Naive thymus-derived CD4-positive, alpha-beta T cell (primary cell): ENCODE measurements at regions of chr12 and their contacts with region 1.

Region 1: GRCh38 chr12:26937875-26938700 is at the starts of genes FGFR1OP2 and INTS13:
- DNase-seq: peak; percentile 82 to 96 (median 93)
- ATAC-seq: peak; percentile 95
- H3K4me3 ChIP-seq: peak within 1 kb of the TSS; percentile 96
- H3K4me3 Mint-ChIP-seq: peak within 1 kb of the TSS; percentile 87 to 99 (median 97)
- H3K27ac ChIP-seq: peak within 1 kb of the TSS; percentile 94
- H3K27ac Mint-ChIP-seq: peak within 1 kb of the TSS; percentile 91 to 99 (median 95)
- H3K4me1 ChIP-seq: peaks cover 32 to 35% of the 10 kb centered on the region in 2 donors
- H3K4me1 Mint-ChIP-seq: peaks cover 42 to 79% (median 68%) of the 10 kb centered on the region in 7 donors
- H3K27me3 ChIP-seq: no peaks in the 10 kb centered on the region
- H3K27me3 Mint-ChIP-seq: peaks cover 0 to 3% (median 0%) of the 10 kb centered on the region in 5 donors
- total RNA-seq, gene FGFR1OP2: 35.6 to 84.0 (median 79.0) TPM
- total RNA-seq, gene INTS13: 13.2 to 46.7 (median 19.0) TPM

Region 2: GRCh38 chr12:25386831-25387731 is 1551.0 kb before region 1 on chr12:
- CTCF ChIA-PET with region 1: no interaction called
- POLR2A ChIA-PET with region 1: no interaction called
- intact Hi-C with region 1: loop called in 1 of 2 experiments (anchors 1 kb)
- DNase-seq: peak; percentile 48 to 86 (median 83)
- ATAC-seq: peak; percentile 18
- H3K4me3 ChIP-seq: peak overlapping the region; percentile 97
- H3K4me3 Mint-ChIP-seq: peak overlapping the region; percentile 90 to 100 (median 96)
- H3K27ac ChIP-seq: peak overlapping the region; percentile 98
- H3K27ac Mint-ChIP-seq: peak overlapping the region; percentile 91 to 100 (median 100)
- H3K4me1 ChIP-seq: peaks cover 19 to 24% of the 10 kb centered on the region in 2 donors
- H3K4me1 Mint-ChIP-seq: peaks cover 13 to 61% (median 35%) of the 10 kb centered on the region in 7 donors
- H3K27me3 ChIP-seq: no peaks in the 10 kb centered on the region
- H3K27me3 Mint-ChIP-seq: peaks cover 0 to 2% (median 0%) of the 10 kb centered on the region in 5 donors

Region 3: DNA sequence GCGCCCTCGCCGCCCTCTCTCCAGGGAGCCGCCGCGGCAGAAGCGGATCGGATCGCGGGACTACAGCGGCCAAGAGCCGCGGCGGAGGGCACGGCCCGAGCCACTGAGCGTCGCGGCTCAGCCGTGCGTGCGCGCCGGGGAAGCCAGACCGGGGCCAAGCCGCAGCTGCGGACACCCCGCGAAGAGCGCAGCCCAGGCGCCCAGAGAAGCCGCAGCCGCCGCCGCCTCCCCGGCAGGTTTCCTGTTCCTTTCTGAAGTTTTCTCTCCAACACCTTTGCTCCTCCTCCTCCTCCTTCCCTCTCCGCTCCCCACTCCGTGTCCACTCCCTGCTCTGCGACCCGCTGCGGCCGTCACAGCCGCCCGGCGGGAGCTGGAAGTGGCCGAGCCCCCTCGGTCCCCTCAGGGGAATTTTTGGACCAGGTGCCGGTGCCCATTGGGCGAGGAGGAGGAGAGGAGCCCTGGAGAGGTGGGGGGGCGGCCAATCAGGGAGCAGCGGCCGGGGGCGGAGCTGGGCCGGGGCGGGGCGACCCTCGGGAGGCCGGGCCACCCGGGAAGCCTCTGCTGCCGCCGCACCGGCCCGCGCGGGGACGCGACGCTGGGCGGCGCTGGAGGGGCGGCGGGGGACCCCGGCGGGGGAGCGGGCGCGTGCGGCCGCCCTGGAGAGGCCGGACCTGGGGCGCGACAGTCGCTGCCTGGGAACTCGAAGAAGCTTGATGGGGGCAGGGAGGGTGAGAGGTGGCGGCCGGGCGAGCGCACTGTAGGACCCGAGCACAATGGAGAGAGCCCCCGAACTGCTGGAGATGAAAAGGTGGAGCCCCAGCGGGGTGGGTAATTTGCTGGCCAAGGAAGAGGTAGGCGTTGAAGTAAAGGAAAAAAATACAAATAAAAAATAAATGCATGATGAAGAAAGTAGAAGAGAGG is 105.0 kb before region 1 on chr12 and contains the start of gene ITPR2:
- CTCF ChIA-PET with region 1: no interaction called
- POLR2A ChIA-PET with region 1: interaction called, 5 read pairs
- intact Hi-C with region 1: loop called (anchors 1 kb)
- DNase-seq: peak; percentile 81 to 94 (median 89)
- ATAC-seq: peak; percentile 96
- H3K4me3 ChIP-seq: peak within 1 kb of the TSS; percentile 96
- H3K4me3 Mint-ChIP-seq: peak within 1 kb of the TSS; percentile 92 to 100 (median 98)
- H3K27ac ChIP-seq: peak within 1 kb of the TSS; percentile 92
- H3K27ac Mint-ChIP-seq: peak within 1 kb of the TSS; percentile 95 to 99 (median 98)
- H3K4me1 ChIP-seq: peaks cover 12 to 16% of the 10 kb centered on the region in 2 donors
- H3K4me1 Mint-ChIP-seq: peaks cover 26 to 51% (median 45%) of the 10 kb centered on the region in 7 donors
- H3K27me3 ChIP-seq: no peaks in the 10 kb centered on the region
- H3K27me3 Mint-ChIP-seq: no peaks in the 10 kb centered on the region
- total RNA-seq, gene ITPR2: 44.9 to 71.5 (median 59.2) TPM

Region 4: DNA sequence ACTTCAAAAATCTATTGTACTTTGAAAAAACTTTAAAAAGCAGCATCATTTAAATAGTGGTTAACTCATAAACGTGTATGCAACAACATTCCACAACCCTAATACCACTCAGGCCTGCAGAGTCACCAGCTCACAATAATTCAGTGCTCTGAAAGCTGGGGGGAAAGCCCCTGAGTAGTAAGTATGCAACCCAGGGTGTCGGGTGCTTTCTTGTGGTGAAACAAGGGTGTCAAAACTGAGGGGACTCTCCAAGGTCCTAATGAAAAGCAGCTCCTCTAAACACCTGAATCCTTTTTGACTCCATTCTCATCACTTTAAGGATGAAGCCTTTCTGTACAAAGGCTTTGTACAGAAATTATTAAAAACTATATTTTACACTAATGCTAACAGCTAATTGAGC is 33.9 kb after region 1 on chr12:
- CTCF ChIA-PET with region 1: interaction called, 3 read pairs
- POLR2A ChIA-PET with region 1: no interaction called
- intact Hi-C with region 1: loop called (anchors 1 kb)
- DNase-seq: peak in 8 of 9 donors; percentile 15 to 76 (median 44)
- ATAC-seq: peak; percentile 98
- H3K4me3 ChIP-seq: no peak overlapping the region
- H3K4me3 Mint-ChIP-seq: peak overlapping the region in 2 of 10 donors; percentile 16 to 43
- H3K27ac ChIP-seq: no peak overlapping the region
- H3K27ac Mint-ChIP-seq: peak overlapping the region in 7 of 9 donors; percentile 9 to 66 (median 45)
- H3K4me1 ChIP-seq: peaks cover 0 to 19% of the 10 kb centered on the region in 2 donors
- H3K4me1 Mint-ChIP-seq: peaks cover 6 to 22% (median 14%) of the 10 kb centered on the region in 7 donors
- H3K27me3 ChIP-seq: no peaks in the 10 kb centered on the region
- H3K27me3 Mint-ChIP-seq: no peaks in the 10 kb centered on the region

Region 5: GRCh38 chr12:27243804-27244683 is 306.0 kb after region 1 on chr12 and contains the start of gene STK38L:
- CTCF ChIA-PET with region 1: no interaction called
- POLR2A ChIA-PET with region 1: interaction called, 3 read pairs
- intact Hi-C with region 1: loop called (anchors 1 kb)
- DNase-seq: peak; percentile 94 to 98 (median 96)
- ATAC-seq: peak; percentile 98
- H3K4me3 ChIP-seq: peak within 1 kb of the TSS; percentile 84
- H3K4me3 Mint-ChIP-seq: peak within 1 kb of the TSS; percentile 97 to 100 (median 99)
- H3K27ac ChIP-seq: peak within 1 kb of the TSS; percentile 82
- H3K27ac Mint-ChIP-seq: peak within 1 kb of the TSS; percentile 92 to 99 (median 97)
- H3K4me1 ChIP-seq: peaks cover 12 to 13% of the 10 kb centered on the region in 2 donors
- H3K4me1 Mint-ChIP-seq: peaks cover 17 to 62% (median 51%) of the 10 kb centered on the region in 7 donors
- H3K27me3 ChIP-seq: no peaks in the 10 kb centered on the region
- H3K27me3 Mint-ChIP-seq: no peaks in the 10 kb centered on the region
- total RNA-seq, gene STK38L: 16.2 to 22.8 (median 21.2) TPM

Region 6: GRCh38 chr12:27523642-27524493 is 585.8 kb after region 1 on chr12 and contains the start of gene PPFIBP1:
- CTCF ChIA-PET with region 1: no interaction called
- POLR2A ChIA-PET with region 1: no interaction called
- intact Hi-C with region 1: loop called (anchors 1 kb)
- DNase-seq: peak; percentile 81 to 95 (median 88)
- ATAC-seq: peak; percentile 99
- H3K4me3 ChIP-seq: peak within 1 kb of the TSS; percentile 78
- H3K4me3 Mint-ChIP-seq: peak within 1 kb of the TSS; percentile 95 to 99 (median 98)
- H3K27ac ChIP-seq: peak within 1 kb of the TSS; percentile 82
- H3K27ac Mint-ChIP-seq: peak within 1 kb of the TSS; percentile 89 to 99 (median 98)
- H3K4me1 ChIP-seq: peaks cover 5 to 7% of the 10 kb centered on the region in 2 donors
- H3K4me1 Mint-ChIP-seq: peaks cover 12 to 43% (median 28%) of the 10 kb centered on the region in 7 donors
- H3K27me3 ChIP-seq: no peaks in the 10 kb centered on the region
- H3K27me3 Mint-ChIP-seq: peaks cover 0 to 39% (median 7%) of the 10 kb centered on the region in 5 donors
- total RNA-seq, gene PPFIBP1: 3.3 to 29.2 (median 7.5) TPM